ENCODE measurements at regions of chr3 and their contacts with region 1.

Region 1: GRCh38 chr3:129650256-129650872 is 43.9 kb upstream of the PLXND1 start:
- DNase-seq: peak; percentile 69
- H3K4me3 ChIP-seq: no peak overlapping the region
- H3K27ac ChIP-seq: no peak overlapping the region
- H3K4me1 ChIP-seq: peaks cover 0 to 4% (median 0%) of the 10 kb centered on the region in 4 donors
- H3K27me3 ChIP-seq: no peaks in the 10 kb centered on the region
- CTCF ChIP-seq: peak; percentile 58 to 70 (median 59)
- EP300 ChIP-seq: no peak
- POLR2A ChIP-seq: no peak

Region 2: GRCh38 chr3:128784232-128784631 is 866.1 kb before region 1 on chr3:
- in situ Hi-C with region 1: no loop called
- intact Hi-C with region 1: no loop called
- DNase-seq: no peak
- H3K4me3 ChIP-seq: no peak overlapping the region
- H3K27ac ChIP-seq: no peak overlapping the region
- H3K4me1 ChIP-seq: peaks cover 47 to 90% (median 50%) of the 10 kb centered on the region in 4 donors
- H3K27me3 ChIP-seq: no peaks in the 10 kb centered on the region
- CTCF ChIP-seq: peak in 1 of 5 experiments; percentile 10
- EP300 ChIP-seq: no peak
- POLR2A ChIP-seq: no peak

Region 3: GRCh38 chr3:129812589-129812988 is 162.2 kb after region 1 on chr3:
- in situ Hi-C with region 1: loop called in 1 of 4 experiments (anchors 10 kb)
- intact Hi-C with region 1: no loop called
- DNase-seq: no peak
- H3K4me3 ChIP-seq: no peak overlapping the region
- H3K27ac ChIP-seq: no peak overlapping the region
- H3K4me1 ChIP-seq: peaks cover 0 to 10% (median 0%) of the 10 kb centered on the region in 4 donors
- H3K27me3 ChIP-seq: no peaks in the 10 kb centered on the region
- CTCF ChIP-seq: no peak
- EP300 ChIP-seq: no peak
- POLR2A ChIP-seq: no peak

Region 4: DNA sequence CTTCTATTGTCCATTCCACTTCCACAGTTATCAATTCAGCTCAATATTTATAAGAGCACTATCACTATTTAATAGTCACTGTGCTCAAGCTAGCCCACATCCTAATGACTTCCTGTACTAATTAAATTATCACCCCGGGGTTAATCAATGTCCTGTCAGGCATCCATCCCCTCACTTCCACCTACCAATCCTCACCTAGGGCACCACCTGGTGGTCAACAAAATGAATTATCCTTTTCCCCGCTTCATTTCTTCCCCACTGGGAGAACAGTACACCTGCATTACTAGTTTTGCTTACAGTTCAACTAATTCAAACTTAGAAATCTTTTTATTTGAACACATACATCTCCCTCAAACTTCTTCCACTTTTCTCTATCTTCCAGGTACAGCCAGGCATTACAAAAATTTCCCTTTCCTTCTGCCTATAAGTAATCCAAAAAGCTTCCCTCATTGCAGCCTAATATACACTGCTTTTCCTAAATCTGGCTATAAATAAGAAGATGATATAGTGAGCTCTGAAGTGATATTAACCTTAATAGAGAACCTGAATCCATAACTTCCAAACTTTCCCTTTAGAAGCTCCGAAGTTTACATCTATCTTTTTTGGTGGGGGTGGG is 174.7 kb after region 1 on chr3:
- in situ Hi-C with region 1: loop called in 3 of 4 experiments (anchors 10 kb)
- intact Hi-C with region 1: loop called (anchors 5 kb)
- DNase-seq: peak; percentile 31
- H3K4me3 ChIP-seq: no peak overlapping the region
- H3K27ac ChIP-seq: no peak overlapping the region
- H3K4me1 ChIP-seq: peaks cover 0 to 25% (median 0%) of the 10 kb centered on the region in 4 donors
- H3K27me3 ChIP-seq: no peaks in the 10 kb centered on the region
- CTCF ChIP-seq: peak; percentile 65 to 79 (median 66)
- EP300 ChIP-seq: no peak
- POLR2A ChIP-seq: no peak

Region 5: GRCh38 chr3:129927072-129927471 is 276.7 kb after region 1 on chr3:
- in situ Hi-C with region 1: loop called in 3 of 4 experiments (anchors 10 to 25 kb)
- intact Hi-C with region 1: loop called (anchors 10 kb)
- DNase-seq: no peak
- H3K4me3 ChIP-seq: no peak overlapping the region
- H3K27ac ChIP-seq: no peak overlapping the region
- H3K4me1 ChIP-seq: no peaks in the 10 kb centered on the region
- H3K27me3 ChIP-seq: no peaks in the 10 kb centered on the region
- CTCF ChIP-seq: no peak
- EP300 ChIP-seq: no peak
- POLR2A ChIP-seq: no peak

Measured in transverse colon (tissue), 4 donors.